ENCODE measurements at regions of chr7 and their contacts with region 1.

Region 1: GRCh38 chr7:100896732-100897608 is 1.3 kb upstream of the ACHE start:
- DNase-seq: peak in 5 of 10 donors; percentile 62 to 86 (median 68)
- H3K4me3 ChIP-seq: peak overlapping the region; percentile 30 to 71 (median 59)
- H3K27ac ChIP-seq: peak overlapping the region in 36 of 59 donors; percentile 4 to 81 (median 60)
- H3K27me3 ChIP-seq: peaks cover 0 to 29% (median 0%) of the 10 kb centered on the region in 45 donors
- CTCF ChIP-seq: peak; percentile 33 to 93 (median 81)

Region 2: GRCh38 chr7:100957832-100958421 is 61.0 kb after region 1 on chr7:
- intact Hi-C with region 1: no loop called
- DNase-seq: no peak
- H3K4me3 ChIP-seq: no peak overlapping the region
- H3K27ac ChIP-seq: no peak overlapping the region
- H3K27me3 ChIP-seq: peaks cover 0 to 18% (median 5%) of the 10 kb centered on the region in 45 donors
- CTCF ChIP-seq: no peak

Region 3: GRCh38 chr7:101058355-101058754 is 161.4 kb after region 1 on chr7:
- intact Hi-C with region 1: loop called (anchors 2 kb)
- DNase-seq: peak in 6 of 10 donors; percentile 30 to 56 (median 46)
- H3K4me3 ChIP-seq: no peak overlapping the region
- H3K27ac ChIP-seq: no peak overlapping the region
- H3K27me3 ChIP-seq: peaks cover 0 to 36% (median 2%) of the 10 kb centered on the region in 45 donors
- CTCF ChIP-seq: peak in 23 of 56 donors; percentile 9 to 55 (median 25)

Region 4: DNA sequence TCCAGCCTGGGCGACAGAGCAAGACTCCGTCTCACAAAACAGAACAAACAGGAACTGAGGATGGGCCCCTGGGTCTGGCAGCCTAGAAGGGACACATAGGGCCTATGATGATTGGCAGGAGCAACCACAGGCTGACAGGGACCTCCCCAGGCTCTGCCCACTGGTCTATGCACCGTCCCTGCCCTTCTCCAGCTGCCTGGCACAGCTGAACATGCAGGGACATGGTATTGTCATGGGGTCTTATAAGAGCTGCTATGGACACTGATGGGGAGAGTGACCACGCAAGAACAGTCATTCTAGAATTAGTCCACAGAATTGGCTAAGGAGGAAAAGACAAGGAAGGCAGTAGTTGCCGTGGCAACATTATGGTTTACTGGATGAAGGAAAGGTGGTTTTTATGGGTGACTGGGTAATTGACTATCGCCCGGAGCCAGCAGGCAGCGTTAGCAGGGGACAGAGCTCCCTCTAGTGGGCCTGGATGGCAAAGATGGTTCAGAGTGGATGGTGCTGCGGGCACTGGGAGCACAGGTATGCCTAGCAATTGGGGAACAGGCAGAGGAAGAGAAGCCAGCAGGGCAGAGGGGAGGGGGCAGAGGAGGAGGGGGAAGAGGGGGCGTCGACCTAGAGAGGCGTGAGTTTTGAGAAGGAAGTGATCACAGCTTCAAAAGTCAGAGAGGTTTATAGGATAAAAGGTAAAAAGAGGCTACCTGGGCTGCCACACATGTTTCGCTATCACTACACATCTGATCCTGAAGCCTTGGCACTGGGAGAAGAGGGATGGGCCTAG is 180.5 kb after region 1 on chr7:
- intact Hi-C with region 1: loop called (anchors 5 kb)
- DNase-seq: peak in 9 of 10 donors; percentile 62 to 85 (median 79)
- H3K4me3 ChIP-seq: no peak overlapping the region
- H3K27ac ChIP-seq: no peak overlapping the region
- H3K27me3 ChIP-seq: no peaks in the 10 kb centered on the region
- CTCF ChIP-seq: peak; percentile 37 to 83 (median 75)